GM12878 (cell line): ENCODE measurements at regions of chr7 and their contacts with region 1.

Region 1: GRCh38 chr7:2232766-2233520 is at the start of gene MAD1L1:
- DNase-seq: no peak
- ATAC-seq: peak; percentile 82
- H3K4me3 ChIP-seq: peak within 1 kb of the TSS; percentile 86
- H3K27ac ChIP-seq: peak within 1 kb of the TSS; percentile 86
- H3K4me1 ChIP-seq: peaks cover 13% of the 10 kb centered on the region
- H3K27me3 ChIP-seq: no peaks in the 10 kb centered on the region
- CTCF ChIP-seq: no peak
- EP300 ChIP-seq: no peak
- POLR2A ChIP-seq: peak; percentile 88
- RAD21 ChIP-seq: no peak
- polyA plus RNA-seq, gene MAD1L1: 2.2 to 5.1 TPM

Region 2: GRCh38 chr7:2129323-2130095 is 103.4 kb before region 1 on chr7:
- CTCF ChIA-PET with region 1: no interaction called
- POLR2A ChIA-PET with region 1: no interaction called
- RAD21 ChIA-PET with region 1: no interaction called
- SMC1A ChIA-PET with region 1: no interaction called
- in situ Hi-C with region 1: no loop called
- intact Hi-C with region 1: no loop called
- DNase-seq: no peak
- ATAC-seq: no peak
- H3K4me3 ChIP-seq: no peak overlapping the region
- H3K27ac ChIP-seq: no peak overlapping the region
- H3K4me1 ChIP-seq: no peaks in the 10 kb centered on the region
- H3K27me3 ChIP-seq: no peaks in the 10 kb centered on the region
- CTCF ChIP-seq: no peak
- EP300 ChIP-seq: no peak
- POLR2A ChIP-seq: no peak
- RAD21 ChIP-seq: no peak

Region 3: DNA sequence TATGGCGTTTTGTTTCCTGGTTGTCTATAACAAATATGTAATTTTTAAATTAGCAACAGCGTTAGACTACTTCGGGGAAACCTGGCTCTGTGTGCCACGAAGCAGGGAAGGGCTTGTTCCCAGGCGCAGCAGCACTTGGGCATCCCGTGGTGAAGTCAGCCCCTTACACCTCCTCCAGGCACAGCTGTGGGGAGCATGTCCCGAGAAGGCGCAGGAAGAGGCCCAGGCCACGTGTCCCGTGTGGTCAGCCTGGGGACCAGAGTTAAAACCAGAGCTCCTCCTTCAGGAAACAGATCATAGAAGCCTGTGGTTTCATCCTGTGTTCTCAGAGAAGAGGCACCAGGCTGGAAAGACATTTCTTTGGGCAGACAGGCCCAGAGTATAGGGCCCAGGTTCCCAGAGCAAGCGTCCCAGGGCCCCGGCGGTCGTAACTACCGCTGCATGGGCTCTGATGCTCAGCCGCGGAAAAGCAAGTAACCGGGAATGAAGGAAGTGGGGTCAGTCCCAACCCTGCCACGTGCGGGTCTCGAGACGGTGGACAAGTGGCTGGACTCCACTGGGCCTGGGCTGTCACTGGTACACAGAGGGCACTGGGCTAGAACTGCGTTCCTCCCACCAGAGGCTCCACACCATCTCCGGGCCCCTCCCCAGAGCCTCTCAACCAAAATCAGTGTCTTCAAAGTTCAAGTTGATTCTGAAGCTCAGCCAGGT is 16.2 kb after region 1 on chr7:
- CTCF ChIA-PET with region 1: interaction called, 10 read pairs
- POLR2A ChIA-PET with region 1: no interaction called
- RAD21 ChIA-PET with region 1: interaction called, 4 read pairs
- SMC1A ChIA-PET with region 1: interaction called, 8 read pairs
- in situ Hi-C with region 1: no loop called
- intact Hi-C with region 1: no loop called
- DNase-seq: peak; percentile 48
- ATAC-seq: peak; percentile 67
- H3K4me3 ChIP-seq: peak overlapping the region; percentile 50; the same call in 1 of the 2 replicates
- H3K27ac ChIP-seq: peak overlapping the region; percentile 67
- H3K4me1 ChIP-seq: peaks cover 33% of the 10 kb centered on the region
- H3K27me3 ChIP-seq: no peaks in the 10 kb centered on the region
- CTCF ChIP-seq: peak in 2 of 3 experiments; percentile 12 to 54; a peak in 2 of 6 replicates
- EP300 ChIP-seq: 0 out of 4 replicates have a peak, but pooled peaks of 1 of the 2 experiments have one; percentile 13
- POLR2A ChIP-seq: peak; percentile 44; the same call in 1 of the 2 replicates
- RAD21 ChIP-seq: 0 out of 2 replicates have a peak, but pooled peaks have one; percentile 24

Region 4: GRCh38 chr7:2258661-2259365 is 25.9 kb after region 1 on chr7:
- CTCF ChIA-PET with region 1: interaction called, 7 read pairs
- POLR2A ChIA-PET with region 1: interaction called, 10 read pairs
- RAD21 ChIA-PET with region 1: interaction called, 5 read pairs
- SMC1A ChIA-PET with region 1: interaction called, 10 read pairs
- in situ Hi-C with region 1: no loop called
- intact Hi-C with region 1: no loop called
- DNase-seq: peak; percentile 50
- ATAC-seq: peak; percentile 92
- H3K4me3 ChIP-seq: no peak overlapping the region
- H3K27ac ChIP-seq: peak overlapping the region; percentile 65
- H3K4me1 ChIP-seq: peaks cover 45% of the 10 kb centered on the region
- H3K27me3 ChIP-seq: no peaks in the 10 kb centered on the region
- CTCF ChIP-seq: no peak
- EP300 ChIP-seq: peak; percentile 46 to 48; a peak in 1 of 4 replicates
- POLR2A ChIP-seq: no peak
- RAD21 ChIP-seq: no peak

Region 5: DNA sequence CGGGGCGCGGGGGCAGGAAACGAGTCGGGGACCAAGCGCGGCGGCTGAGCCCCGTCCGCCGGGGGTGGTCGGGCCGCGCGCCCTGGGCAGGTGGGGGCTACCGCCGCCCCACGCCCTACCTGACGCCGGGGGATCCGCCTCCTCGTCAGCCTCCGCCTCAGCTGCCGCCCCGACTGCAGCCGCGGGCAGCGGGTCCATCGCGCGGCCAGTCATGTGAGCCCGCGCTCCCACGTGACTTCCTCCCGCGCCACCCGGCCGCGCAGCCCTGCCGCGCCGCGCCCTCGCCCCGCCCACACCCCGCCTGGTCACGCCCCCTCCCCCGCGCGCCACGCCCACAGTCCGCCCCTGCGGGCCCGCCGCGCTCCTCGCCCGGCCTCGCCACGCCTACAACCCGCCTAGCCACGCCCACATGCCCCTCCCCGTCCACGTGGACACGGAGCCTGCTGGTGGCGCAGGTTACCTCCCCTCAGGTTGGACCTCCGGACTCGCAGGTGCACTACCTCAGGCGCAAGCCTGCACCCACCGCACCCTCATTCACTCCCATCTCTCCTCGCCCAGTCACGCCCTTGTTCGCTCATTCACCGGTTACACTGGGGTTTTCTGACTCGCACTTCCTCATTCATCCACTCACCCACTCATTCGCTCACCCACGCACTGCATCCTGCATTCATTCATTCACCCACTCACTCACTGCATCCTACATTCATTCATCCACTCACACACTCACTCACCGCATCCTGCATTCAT is 81.4 kb after region 1 on chr7 and contains the start of gene SNX8:
- CTCF ChIA-PET with region 1: interaction called, 3 read pairs
- POLR2A ChIA-PET with region 1: interaction called, 7 read pairs
- RAD21 ChIA-PET with region 1: interaction called, 10 read pairs
- SMC1A ChIA-PET with region 1: interaction called, 6 read pairs
- in situ Hi-C with region 1: no loop called
- intact Hi-C with region 1: no loop called
- DNase-seq: no peak
- ATAC-seq: peak; percentile 77
- H3K4me3 ChIP-seq: peak within 1 kb of the TSS; percentile 99
- H3K27ac ChIP-seq: peak within 1 kb of the TSS; percentile 92
- H3K4me1 ChIP-seq: peaks cover 17% of the 10 kb centered on the region
- H3K27me3 ChIP-seq: no peaks in the 10 kb centered on the region
- CTCF ChIP-seq: no peak
- EP300 ChIP-seq: 0 out of 4 replicates have a peak, but pooled peaks of 1 of the 2 experiments have one; percentile 15
- POLR2A ChIP-seq: peak; percentile 88
- RAD21 ChIP-seq: no peak
- polyA plus RNA-seq, gene SNX8: 6.4 to 21.5 TPM

Region 6: GRCh38 chr7:2403718-2404648 is 171.0 kb after region 1 on chr7:
- CTCF ChIA-PET with region 1: no interaction called
- POLR2A ChIA-PET with region 1: interaction called, 3 read pairs
- RAD21 ChIA-PET with region 1: no interaction called
- SMC1A ChIA-PET with region 1: no interaction called
- in situ Hi-C with region 1: no loop called
- intact Hi-C with region 1: loop called (anchors 2 kb)
- DNase-seq: no peak
- ATAC-seq: peak; percentile 7
- H3K4me3 ChIP-seq: peak overlapping the region; percentile 70
- H3K27ac ChIP-seq: peak overlapping the region; percentile 84
- H3K4me1 ChIP-seq: peaks cover 42% of the 10 kb centered on the region
- H3K27me3 ChIP-seq: no peaks in the 10 kb centered on the region
- CTCF ChIP-seq: 0 out of 6 replicates have a peak, but pooled peaks of 1 of the 3 experiments have one; percentile 8
- EP300 ChIP-seq: no peak
- POLR2A ChIP-seq: no peak; the same call in 1 of the 2 replicates
- RAD21 ChIP-seq: no peak